ENCODE measurements at regions of chr4 and their contacts with region 1.

Region 1: DNA sequence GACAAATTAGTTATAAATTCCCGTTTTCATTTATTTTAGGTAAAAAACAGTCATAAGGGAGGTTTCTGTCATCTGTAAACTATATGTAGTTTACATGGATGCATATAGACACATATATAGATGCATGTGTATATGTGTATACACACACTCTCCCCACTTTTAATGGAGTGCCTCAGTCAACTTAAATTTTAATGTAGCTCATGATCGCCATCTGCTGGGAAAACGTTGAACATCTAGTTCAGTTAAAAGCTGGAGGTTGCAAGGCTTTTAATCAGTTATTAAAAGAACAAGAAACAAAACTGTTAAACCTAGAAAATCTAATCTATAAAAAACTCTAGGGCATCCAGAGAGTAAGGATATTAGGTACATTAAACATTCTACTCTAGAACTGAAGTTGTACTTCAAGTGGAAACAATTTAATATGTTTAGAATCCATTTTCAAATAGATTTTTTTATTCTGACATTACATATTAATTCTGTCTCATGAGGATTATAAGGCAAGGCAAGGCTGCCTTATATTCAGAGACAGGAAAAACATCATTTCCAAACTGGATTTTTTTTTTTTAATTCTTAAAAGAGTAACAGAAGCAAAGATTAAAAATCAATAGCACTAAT is 122.6 kb downstream of the SHISA3 start:
- DNase-seq: no peak

Region 2: DNA sequence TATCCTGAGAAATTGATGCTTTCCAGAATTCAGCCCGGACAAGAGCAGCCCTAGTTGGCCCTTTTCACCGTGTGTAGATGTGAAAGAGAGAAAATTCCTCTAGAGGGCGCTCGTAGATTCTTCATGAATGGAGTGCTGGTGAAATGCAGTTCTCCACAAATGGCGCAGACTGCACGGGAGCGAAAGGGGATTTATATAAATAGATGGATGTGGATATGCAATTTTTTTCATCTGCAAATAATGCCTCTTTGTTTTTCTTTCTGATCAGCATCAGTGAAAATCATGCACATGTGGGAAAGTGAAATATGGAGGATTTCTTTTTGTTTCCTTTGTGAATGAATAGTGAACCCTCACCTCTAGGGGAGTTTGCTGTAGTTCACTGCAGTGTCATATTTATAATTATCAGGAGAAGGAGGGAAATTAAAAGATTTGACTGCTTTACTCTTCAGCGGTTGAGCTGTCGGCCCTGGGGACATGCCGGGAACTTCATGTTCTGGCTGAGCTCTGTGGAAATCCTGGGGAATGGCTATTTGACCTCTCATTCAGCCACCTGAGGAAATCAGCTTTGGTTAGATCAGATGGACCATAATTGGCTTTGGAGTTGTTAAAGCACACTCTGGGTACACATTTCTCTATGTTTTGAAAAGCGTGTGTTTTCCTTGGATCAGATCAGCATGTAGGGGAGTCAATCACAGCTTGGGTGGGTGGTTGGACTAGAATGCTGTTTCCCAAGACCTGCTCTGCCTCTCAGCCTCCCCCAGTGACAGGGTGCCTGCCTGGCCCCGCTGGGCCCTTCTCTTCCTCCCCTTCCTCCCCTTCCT is 237.6 kb before region 1 on chr4:
- intact Hi-C with region 1: loop called (anchors 5 to 10 kb)
- DNase-seq: no peak

Measured in posterior vena cava (tissue), 2 donors.